ENCODE measurements at regions of chr2 and their contacts with region 1.

Region 1: GRCh38 chr2:10278029-10278762 is 24.5 kb upstream of the HPCAL1 start:
- H3K4me3 Mint-ChIP-seq: peak overlapping the region; percentile 51
- H3K27ac Mint-ChIP-seq: peak overlapping the region; percentile 92
- H3K4me1 Mint-ChIP-seq: peaks cover 63% of the 10 kb centered on the region
- H3K27me3 Mint-ChIP-seq: no peaks in the 10 kb centered on the region

Region 2: DNA sequence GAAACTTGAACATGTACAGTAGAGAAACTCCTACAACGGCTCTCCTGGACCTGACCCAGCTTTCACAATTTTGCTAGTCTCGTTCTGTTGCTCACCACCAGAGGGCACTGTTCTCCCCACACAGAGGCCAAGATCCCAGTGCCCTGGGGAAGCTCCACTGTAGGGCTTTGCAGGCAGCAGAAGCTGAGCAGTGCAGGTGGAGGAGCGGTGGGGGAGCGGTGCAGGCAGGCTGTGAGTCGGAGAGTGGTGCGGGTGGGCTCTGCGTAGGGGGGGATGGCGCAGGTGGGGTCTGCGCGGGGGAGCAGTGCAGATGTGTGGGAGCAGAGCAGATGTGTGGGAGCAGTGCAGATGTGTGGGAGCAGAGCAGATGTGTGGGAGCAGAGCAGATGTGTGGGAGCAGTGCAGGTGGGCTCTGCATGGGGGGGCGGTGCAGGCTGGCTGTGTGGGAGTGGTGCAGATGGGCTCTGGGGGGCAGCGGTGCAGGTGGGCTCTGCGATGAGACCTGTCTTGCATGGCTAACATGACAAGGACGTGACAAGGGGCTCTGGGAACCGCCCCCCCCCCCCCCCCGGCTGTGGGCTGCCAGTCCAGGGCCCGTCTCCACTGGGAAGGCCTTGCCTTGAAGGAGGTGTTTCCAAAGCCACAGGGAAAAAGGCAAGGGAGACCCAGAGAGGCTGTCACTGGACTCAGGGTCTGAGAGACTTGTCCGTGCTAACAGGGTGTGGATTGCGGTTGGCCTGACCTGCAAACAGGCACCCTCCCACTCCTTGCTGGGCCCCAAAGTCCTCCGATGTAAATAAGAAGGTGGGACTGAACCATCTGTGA is 205.3 kb before region 1 on chr2:
- intact Hi-C with region 1: no loop called
- H3K4me3 Mint-ChIP-seq: no peak overlapping the region
- H3K27ac Mint-ChIP-seq: no peak overlapping the region
- H3K4me1 Mint-ChIP-seq: peaks cover 7% of the 10 kb centered on the region
- H3K27me3 Mint-ChIP-seq: peaks cover 62% of the 10 kb centered on the region

Region 3: DNA sequence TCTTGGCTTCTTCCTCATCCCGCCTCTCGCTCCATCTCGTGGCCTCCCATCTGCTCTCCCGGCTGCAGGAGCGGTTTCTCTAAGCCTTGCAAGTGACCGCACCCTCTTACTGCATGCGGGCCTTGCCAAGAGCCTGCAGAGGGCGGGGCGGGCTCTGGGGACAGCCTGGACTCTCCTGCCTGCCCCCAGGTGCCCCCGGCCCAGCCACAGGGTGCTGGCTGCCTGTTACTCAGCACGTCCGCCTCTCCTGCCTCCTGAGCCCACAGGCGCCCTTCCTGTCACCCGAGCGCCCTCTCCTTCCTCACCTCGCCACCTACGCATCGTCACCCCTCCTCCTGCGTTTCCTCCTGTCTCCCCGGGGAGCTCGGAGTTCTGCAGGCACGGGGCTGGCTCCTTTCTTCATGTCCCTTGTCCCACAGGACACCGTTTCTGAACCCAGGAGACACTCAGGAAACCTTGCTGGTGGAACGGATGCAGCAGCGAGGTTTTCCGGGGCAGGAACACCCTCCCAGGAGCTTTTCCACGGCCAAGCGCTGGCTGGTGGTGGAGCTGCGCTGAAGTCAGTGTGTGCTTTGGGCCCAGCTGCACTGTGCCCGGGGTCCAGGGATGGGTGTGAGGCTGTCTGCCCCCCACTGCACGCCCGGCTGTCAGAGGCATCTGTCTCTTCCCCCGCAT is 53.0 kb after region 1 on chr2:
- intact Hi-C with region 1: loop called (anchors 2 kb)
- H3K4me3 Mint-ChIP-seq: peak overlapping the region; percentile 63
- H3K27ac Mint-ChIP-seq: peak overlapping the region; percentile 95
- H3K4me1 Mint-ChIP-seq: peaks cover 77% of the 10 kb centered on the region
- H3K27me3 Mint-ChIP-seq: no peaks in the 10 kb centered on the region

Measured in dendritic cell treated with granulocyte-macrophage colony-stimulating factor and Interleukin-4, amounts not matched to agents 40 ng/mL and 50 ng/mL, for 4 days (primary cell).